ENCODE measurements at regions of chr14 and their contacts with region 1.

Region 1: DNA sequence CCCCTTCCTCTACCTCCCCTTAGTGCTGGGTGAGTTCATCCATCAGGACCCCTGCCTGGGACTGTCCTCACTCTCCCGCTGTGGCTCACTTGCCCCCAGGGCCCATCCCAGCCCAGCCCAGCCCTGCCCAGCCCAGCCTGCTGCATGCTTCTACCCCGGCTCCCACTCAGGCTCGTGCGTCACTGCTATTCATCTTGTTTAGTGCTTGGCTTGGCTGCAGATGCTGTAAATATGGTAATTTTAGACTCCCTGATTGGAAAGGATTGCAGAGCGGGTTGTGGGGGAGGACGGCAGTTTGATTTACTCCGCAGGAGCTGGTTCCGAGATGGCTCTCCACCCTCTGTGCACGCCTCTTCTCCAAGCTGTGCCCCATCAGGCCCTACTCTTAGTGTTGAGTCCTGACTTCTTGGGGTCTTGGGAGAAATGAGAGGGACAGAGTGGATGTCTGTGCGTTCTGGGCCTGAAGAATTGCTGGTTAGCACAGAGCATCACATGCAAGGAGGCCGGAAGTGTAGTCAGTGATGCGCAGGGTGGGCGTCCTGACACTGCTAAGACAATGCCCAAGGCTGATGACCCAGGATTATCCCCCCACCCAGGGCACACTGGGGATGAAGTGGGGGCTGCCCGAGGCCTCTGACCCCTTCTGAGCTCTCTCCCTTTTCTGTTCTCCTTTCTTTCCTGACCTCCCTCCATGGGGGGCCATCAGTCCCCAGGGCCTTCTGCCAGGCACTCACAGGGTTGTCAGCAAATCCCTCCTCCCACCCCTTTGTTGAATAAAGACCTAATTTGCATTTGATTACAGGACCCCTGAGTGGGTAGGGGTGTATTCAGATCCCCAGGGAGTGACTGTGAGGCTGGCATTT is 244.4 kb downstream of the ZFP36L1 start:
- DNase-seq: peak; percentile 98
- H3K4me3 Mint-ChIP-seq: peak overlapping the region; percentile 69
- H3K27ac Mint-ChIP-seq: peak overlapping the region; percentile 98
- H3K4me1 Mint-ChIP-seq: peaks cover 86% of the 10 kb centered on the region
- H3K27me3 Mint-ChIP-seq: no peaks in the 10 kb centered on the region
- CTCF ChIP-seq: no peak

Region 2: GRCh38 chr14:68248481-68249255 is 299.8 kb before region 1 on chr14:
- CTCF ChIA-PET with region 1: interaction called, 5 read pairs
- POLR2A ChIA-PET with region 1: interaction called, 67 read pairs
- intact Hi-C with region 1: loop called (anchors 1 kb)
- DNase-seq: peak; percentile 60
- H3K4me3 Mint-ChIP-seq: peak overlapping the region; percentile 21
- H3K27ac Mint-ChIP-seq: peak overlapping the region; percentile 80
- H3K4me1 Mint-ChIP-seq: peaks cover 57% of the 10 kb centered on the region
- H3K27me3 Mint-ChIP-seq: no peaks in the 10 kb centered on the region
- CTCF ChIP-seq: peak; percentile 67

Region 3: GRCh38 chr14:68466491-68467032 is 81.9 kb before region 1 on chr14:
- CTCF ChIA-PET with region 1: interaction called, 3 read pairs
- POLR2A ChIA-PET with region 1: interaction called, 68 read pairs
- intact Hi-C with region 1: loop called (anchors 1 kb)
- DNase-seq: peak; percentile 93
- H3K4me3 Mint-ChIP-seq: peak overlapping the region; percentile 60
- H3K27ac Mint-ChIP-seq: peak overlapping the region; percentile 75
- H3K4me1 Mint-ChIP-seq: peaks cover 65% of the 10 kb centered on the region
- H3K27me3 Mint-ChIP-seq: no peaks in the 10 kb centered on the region
- CTCF ChIP-seq: no peak

Region 4: GRCh38 chr14:68499451-68499850 is 49.0 kb before region 1 on chr14:
- CTCF ChIA-PET with region 1: no interaction called
- POLR2A ChIA-PET with region 1: no interaction called
- intact Hi-C with region 1: no loop called
- DNase-seq: no peak
- H3K4me3 Mint-ChIP-seq: no peak overlapping the region
- H3K27ac Mint-ChIP-seq: no peak overlapping the region
- H3K4me1 Mint-ChIP-seq: peaks cover 19% of the 10 kb centered on the region
- H3K27me3 Mint-ChIP-seq: no peaks in the 10 kb centered on the region
- CTCF ChIP-seq: no peak

Region 5: GRCh38 chr14:68526420-68527105 is 21.9 kb before region 1 on chr14:
- CTCF ChIA-PET with region 1: interaction called, 4 read pairs
- POLR2A ChIA-PET with region 1: interaction called, 101 read pairs
- intact Hi-C with region 1: no loop called
- DNase-seq: peak; percentile 81
- H3K4me3 Mint-ChIP-seq: no peak overlapping the region
- H3K27ac Mint-ChIP-seq: peak overlapping the region; percentile 91
- H3K4me1 Mint-ChIP-seq: peaks cover 32% of the 10 kb centered on the region
- H3K27me3 Mint-ChIP-seq: no peaks in the 10 kb centered on the region
- CTCF ChIP-seq: no peak

Region 6: DNA sequence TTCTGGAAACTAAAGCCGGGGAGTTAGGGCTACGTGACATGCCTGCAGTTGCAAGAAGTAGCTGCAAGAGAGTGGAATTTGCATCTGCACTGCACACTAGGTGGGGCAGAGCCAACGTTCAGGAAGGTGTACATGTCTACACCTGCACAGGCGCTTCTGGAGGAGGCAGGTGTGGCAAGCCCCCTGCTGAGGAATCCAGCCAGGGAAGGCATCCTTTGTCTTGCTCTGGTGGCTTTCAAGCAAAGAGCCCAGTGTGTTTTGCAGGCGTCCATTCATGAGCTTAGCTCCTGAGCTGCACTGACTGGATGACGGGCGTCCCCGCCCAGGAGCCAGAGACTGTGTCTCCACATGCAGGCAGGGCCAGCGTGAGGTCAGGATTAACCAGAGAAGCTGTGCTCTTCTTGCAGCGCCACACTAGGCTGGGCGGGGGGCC is 128.1 kb after region 1 on chr14:
- CTCF ChIA-PET with region 1: no interaction called
- POLR2A ChIA-PET with region 1: interaction called, 26 read pairs
- intact Hi-C with region 1: no loop called
- DNase-seq: peak; percentile 93
- H3K4me3 Mint-ChIP-seq: no peak overlapping the region
- H3K27ac Mint-ChIP-seq: peak overlapping the region; percentile 42
- H3K4me1 Mint-ChIP-seq: peaks cover 44% of the 10 kb centered on the region
- H3K27me3 Mint-ChIP-seq: no peaks in the 10 kb centered on the region
- CTCF ChIP-seq: no peak

Region 7: DNA sequence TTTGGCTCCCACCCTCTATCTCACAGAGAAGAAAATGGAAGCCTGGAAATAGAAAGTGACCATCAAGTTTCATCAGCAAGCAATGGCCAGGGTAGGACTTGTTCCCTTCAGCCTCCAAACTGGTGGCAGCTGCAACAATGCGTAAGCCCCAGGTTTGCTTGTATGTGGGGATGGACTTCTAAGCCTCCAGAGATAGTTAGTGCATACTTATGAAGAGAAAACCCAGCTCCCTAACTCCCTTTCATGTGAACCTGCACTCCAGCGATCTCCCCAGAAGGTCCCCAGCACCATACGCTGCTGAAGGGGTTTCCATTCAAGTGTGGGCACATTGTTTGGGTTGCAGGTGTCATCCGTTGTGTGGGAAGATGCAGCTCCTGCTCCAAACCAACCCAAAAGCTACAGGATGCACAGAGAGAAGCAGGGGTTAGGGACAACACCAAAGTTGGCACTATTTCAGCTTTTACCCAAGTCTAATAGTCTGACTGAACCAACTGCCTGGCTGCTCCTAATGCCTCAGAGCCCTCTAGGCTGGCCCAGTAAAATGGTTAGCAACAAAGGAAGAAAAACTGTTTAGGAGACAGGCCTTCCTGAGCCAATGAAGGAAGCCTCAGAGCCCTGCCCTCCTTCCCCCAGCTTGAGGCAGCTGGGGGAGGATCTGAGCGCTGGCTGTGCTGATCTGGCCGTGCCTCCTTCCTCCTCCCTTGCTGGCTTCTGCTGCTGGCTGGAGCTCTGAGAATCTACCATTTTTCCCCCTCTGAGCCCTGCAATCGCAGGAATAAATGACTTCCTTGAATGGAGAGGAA is 232.1 kb after region 1 on chr14:
- CTCF ChIA-PET with region 1: interaction called, 7 read pairs
- POLR2A ChIA-PET with region 1: interaction called, 403 read pairs
- intact Hi-C with region 1: no loop called
- DNase-seq: no peak
- H3K4me3 Mint-ChIP-seq: no peak overlapping the region
- H3K27ac Mint-ChIP-seq: peak overlapping the region; percentile 53
- H3K4me1 Mint-ChIP-seq: peaks cover 38% of the 10 kb centered on the region
- H3K27me3 Mint-ChIP-seq: no peaks in the 10 kb centered on the region
- CTCF ChIP-seq: no peak